Right ventricle myocardium superior (tissue), 1 donor: ENCODE measurements at regions of chr1 and their contacts with region 1.

Region 1: DNA sequence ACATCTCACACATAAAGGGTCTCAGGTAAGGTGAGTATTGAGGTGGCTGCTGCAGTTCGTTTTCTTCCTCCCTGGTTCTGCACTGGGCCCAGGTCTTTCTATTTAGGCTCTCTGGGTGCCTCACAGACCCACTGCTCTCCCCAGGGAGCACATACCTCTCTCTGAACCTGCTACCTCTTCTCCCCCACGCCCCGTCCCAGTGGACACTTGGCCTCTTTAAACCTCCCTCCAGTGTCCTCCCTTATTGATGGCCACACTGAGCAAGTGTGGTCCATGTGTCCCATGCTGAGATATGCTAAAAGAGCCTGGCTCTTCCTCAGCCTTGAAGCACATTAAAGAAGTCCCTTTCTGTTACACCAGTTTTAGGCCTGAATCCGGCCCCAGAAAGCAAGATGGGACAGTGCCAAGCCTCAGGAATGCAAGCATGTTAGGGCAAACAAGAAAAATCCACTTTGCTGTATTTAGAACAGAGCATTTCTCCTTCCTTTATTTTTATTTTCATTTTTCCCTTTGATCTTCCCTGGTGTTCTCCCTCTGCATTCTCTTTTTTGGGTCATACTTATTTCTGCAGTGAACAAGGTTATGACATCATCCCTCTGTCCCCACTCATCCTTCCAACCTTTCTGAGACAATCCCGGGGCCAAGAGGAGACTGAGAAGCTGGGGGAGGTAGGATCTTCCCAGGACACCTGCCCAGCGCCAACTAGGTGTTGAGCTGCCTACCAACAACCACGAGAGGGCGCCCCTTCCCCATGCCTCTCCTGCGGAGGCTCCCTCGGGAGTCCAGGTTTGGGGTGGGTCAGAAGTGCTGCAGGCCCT is 5.0 kb upstream of the CHI3L2 start:
- DNase-seq: peak; percentile 79
- ATAC-seq: peak; percentile 82

Region 2: DNA sequence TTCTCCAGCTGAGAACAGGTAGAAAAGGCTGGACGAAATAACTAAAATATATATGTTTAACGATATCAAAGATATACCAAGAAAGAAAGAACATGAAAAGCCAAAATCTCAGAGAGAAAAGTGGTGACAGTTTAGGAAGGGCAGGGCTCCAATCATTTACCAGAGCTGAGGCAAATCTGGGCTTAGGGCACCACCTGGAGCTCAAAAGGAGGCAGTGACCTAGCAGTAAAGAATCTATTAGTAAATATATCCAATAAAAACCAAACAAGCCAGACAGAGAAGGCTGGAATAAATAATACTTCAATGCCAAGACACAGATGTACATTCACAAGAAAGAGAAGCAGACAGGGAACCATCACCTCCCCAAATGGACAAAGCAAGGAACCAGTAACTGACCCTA is 111.7 kb after region 1 on chr1:
- intact Hi-C with region 1: loop called (anchors 5 kb)
- DNase-seq: no peak
- ATAC-seq: peak; percentile 76

Region 3: DNA sequence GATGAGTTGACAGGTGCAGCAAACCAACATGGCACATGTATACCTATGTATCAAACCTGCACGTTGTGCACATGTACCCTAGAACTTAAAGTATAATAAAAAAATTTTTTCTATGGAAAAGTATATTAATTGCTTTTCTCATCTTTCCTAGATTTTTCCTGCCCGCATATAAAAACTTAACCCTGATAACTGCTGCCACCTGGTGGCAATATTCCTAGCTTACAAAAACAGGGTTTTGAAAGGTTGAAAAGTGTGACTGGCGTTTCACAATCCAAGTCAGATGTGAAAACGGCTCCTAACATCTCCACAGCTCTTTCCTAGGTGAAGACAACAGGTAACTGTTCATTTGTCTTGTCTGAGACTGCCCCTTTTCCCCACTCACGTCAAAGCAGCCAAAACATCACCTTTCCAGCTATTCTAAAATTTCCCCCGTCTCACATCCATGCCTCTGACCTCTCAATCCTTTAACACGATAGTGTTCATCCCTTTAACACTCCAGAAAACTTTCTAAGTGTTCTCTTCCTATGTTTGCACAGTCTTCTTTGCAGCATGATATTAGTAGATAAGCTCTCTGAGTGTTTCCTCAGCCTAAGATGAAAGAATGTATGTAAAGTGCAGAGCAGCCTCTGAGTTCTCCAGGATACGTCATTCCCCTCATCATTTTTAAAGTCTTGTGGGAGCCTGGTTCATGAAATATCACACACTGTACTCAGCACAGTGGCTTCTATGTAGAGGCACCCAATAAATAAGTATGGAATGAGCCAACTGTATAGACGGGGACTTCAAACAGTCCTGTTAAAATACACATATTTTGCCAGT is 177.5 kb after region 1 on chr1:
- intact Hi-C with region 1: loop called (anchors 2 kb)
- DNase-seq: no peak
- ATAC-seq: no peak